Activated naive CD4-positive, alpha-beta T cell treated with anti-CD3 and anti-CD28 coated beads for 36 hours (primary cell): ENCODE measurements at regions of chr15 and their contacts with region 1.

Region 1: DNA sequence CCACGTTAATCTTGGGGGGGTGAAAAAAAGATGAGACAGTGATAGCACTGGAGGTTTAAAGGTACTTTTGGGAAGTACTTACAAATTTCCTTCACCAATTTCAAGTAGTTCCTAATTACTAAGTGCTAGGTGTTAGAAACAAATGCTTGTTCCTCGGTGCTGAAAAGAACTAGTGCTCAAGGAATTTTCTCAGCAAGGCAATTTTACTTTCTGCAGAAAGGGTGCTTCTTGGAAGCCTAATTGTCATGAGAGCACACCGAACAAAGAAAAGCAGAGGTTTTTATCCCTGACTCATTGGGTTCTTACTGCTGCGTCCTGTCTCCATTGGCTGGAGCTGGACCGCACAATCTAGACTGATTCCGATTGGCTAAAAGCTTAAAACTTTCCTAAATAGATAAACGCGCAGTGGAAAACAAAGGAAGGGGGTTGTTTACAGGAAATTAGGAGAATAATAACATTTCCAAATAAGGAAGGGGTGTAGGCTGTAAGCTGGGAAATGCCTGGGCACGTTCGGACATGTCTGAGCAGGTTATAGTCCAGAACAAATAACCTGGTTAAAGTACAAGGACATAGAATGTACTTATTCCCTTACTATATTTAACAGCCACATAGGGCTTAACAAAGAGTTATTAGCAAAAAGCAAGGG is 49.6 kb downstream of the CHD2 start:
- DNase-seq: no peak
- H3K4me3 Mint-ChIP-seq: no peak overlapping the region
- H3K27ac Mint-ChIP-seq: peak overlapping the region; percentile 90
- H3K4me1 Mint-ChIP-seq: peaks cover 17% of the 10 kb centered on the region
- H3K27me3 Mint-ChIP-seq: no peaks in the 10 kb centered on the region

Region 2: GRCh38 chr15:92845126-92845508 is 104.6 kb before region 1 on chr15:
- CTCF ChIA-PET with region 1: no interaction called
- intact Hi-C with region 1: no loop called
- DNase-seq: no peak
- H3K4me3 Mint-ChIP-seq: peak overlapping the region; percentile 71
- H3K27ac Mint-ChIP-seq: peak overlapping the region; percentile 96
- H3K4me1 Mint-ChIP-seq: peaks cover 85% of the 10 kb centered on the region
- H3K27me3 Mint-ChIP-seq: no peaks in the 10 kb centered on the region

Region 3: DNA sequence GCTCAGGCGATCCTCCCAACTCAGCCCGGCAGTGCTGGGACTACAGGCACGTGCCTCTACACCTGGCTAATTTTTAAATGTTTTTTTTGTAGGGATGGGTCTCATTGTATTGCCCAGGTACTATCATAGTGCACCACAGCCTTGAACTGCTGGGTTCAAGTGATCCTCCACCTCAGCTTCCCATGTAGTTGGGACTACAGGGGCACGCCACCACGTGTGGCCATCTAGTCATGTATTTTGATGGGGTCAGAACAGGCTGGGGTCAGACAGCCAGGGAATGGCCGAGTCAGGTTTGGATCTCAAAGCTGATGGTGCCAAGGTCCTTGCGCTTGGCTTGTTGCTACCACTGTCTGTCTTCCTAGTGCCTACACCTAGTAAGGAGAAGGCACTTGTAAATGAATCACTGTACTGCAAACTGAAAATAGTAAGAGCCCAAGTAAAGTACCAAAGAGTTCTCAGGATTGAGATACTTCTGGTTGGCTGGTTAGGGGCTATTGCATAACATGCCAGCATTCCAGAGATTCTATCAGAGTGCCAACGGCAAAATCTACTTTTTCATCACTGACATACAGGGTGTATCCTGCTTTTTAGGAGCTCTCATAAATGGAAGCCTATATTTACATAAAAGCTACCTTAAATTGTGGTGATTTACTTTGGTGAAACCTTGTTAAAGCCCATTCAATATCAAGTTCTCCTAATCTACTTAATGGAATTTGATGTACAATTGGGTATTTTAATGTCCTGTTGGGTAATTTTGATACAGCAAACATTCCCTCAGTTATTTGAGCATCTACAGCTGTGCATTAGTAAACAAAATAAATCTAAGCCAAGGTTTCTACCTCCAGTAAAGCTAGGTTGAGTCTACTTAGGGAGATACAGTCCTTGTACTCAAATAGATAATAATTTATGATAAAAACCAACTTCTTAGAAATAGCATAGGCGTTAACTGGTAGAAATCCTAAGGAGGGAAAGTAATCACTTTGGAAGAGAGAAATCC is 80.4 kb before region 1 on chr15:
- CTCF ChIA-PET with region 1: no interaction called
- intact Hi-C with region 1: no loop called
- DNase-seq: no peak
- H3K4me3 Mint-ChIP-seq: no peak overlapping the region
- H3K27ac Mint-ChIP-seq: no peak overlapping the region
- H3K4me1 Mint-ChIP-seq: no peaks in the 10 kb centered on the region
- H3K27me3 Mint-ChIP-seq: no peaks in the 10 kb centered on the region

Region 4: GRCh38 chr15:92989470-92989869 is 39.7 kb after region 1 on chr15:
- CTCF ChIA-PET with region 1: no interaction called
- intact Hi-C with region 1: loop called (anchors 2 kb)
- DNase-seq: no peak
- H3K4me3 Mint-ChIP-seq: no peak overlapping the region
- H3K27ac Mint-ChIP-seq: peak overlapping the region; percentile 50
- H3K4me1 Mint-ChIP-seq: peaks cover 7% of the 10 kb centered on the region
- H3K27me3 Mint-ChIP-seq: no peaks in the 10 kb centered on the region